ENCODE measurements at regions of chr1 and their contacts with region 1.

Region 1: DNA sequence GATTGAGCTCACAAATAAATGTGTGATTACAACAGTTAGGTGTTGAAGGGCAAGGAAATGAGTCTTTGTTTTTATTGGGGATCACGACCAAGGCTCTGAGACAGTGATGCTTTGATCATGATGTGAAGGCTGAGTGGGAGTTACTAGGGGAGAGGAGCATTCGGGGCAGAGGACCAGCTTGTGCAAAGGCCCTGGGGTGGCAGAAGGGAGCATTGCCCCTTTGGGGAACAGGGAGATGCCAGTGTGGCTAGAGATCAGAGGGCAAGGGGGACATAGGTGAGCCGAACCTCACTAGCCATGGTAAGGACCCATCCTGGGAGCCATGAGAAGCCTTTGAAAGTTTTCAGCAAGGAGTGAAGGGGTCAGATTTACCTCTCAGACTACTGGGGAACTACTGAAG is 31.1 kb downstream of the TNFRSF8 start:
- DNase-seq: no peak
- ATAC-seq: no peak
- H3K4me3 ChIP-seq: no peak overlapping the region
- H3K27ac ChIP-seq: no peak overlapping the region
- H3K4me1 ChIP-seq: no peaks in the 10 kb centered on the region
- H3K27me3 ChIP-seq: no peaks in the 10 kb centered on the region
- CTCF ChIP-seq: no peak

Region 2: DNA sequence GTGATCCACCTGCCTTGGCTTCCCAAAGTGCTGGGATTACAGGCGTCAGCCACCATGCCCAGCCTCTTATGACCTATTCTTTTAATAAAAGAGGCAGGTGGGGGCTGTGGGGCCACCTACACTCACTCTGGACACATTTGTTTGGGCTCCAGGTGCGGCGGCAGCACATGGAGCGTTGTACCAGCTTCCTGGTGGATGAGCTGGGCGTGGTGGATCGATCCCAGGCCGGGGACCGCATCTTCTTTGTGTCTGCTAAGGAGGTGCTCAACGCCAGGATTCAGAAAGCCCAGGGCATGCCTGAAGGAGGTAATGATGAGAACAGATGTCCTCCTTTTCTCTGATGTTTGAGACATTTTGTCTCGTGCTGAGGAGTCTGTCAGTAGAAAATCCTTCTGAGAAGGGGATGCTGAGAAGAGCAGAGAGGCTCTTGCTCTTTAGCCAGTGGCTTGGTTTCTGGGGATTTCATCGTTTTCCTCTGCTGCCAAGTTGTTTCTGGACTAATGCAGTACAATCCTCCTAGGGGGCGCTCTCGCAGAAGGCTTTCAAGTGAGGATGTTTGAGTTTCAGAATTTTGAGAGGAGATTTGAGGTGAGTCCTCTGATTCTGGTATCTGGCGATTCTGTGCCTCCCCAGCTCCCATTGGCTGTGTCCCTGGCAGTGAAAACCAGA is 92.8 kb before region 1 on chr1:
- CTCF ChIA-PET with region 1: interaction called, 11 read pairs
- POLR2A ChIA-PET with region 1: no interaction called
- in situ Hi-C with region 1: no loop called
- intact Hi-C with region 1: no loop called
- DNase-seq: no peak
- ATAC-seq: peak; percentile 10; the same call in 1 of the 2 replicates
- H3K4me3 ChIP-seq: no peak overlapping the region
- H3K27ac ChIP-seq: peak overlapping the region; percentile 55; the same call in 1 of the 2 replicates
- H3K4me1 ChIP-seq: 0 out of 2 replicates have a peak, but pooled peaks cover 3% of the 10 kb centered on the region
- H3K27me3 ChIP-seq: no peaks in the 10 kb centered on the region
- CTCF ChIP-seq: no peak; the same call in 1 of the 2 replicates

Region 3: GRCh38 chr1:12026586-12026985 is 67.6 kb before region 1 on chr1:
- CTCF ChIA-PET with region 1: interaction called, 10 read pairs
- POLR2A ChIA-PET with region 1: no interaction called
- in situ Hi-C with region 1: no loop called
- intact Hi-C with region 1: no loop called
- DNase-seq: no peak
- ATAC-seq: no peak
- H3K4me3 ChIP-seq: no peak overlapping the region
- H3K27ac ChIP-seq: no peak overlapping the region
- H3K4me1 ChIP-seq: no peaks in the 10 kb centered on the region
- H3K27me3 ChIP-seq: no peaks in the 10 kb centered on the region
- CTCF ChIP-seq: no peak

Region 4: GRCh38 chr1:12166834-12167492 is 72.8 kb after region 1 on chr1 and contains the start of gene TNFRSF1B:
- CTCF ChIA-PET with region 1: no interaction called
- POLR2A ChIA-PET with region 1: no interaction called
- in situ Hi-C with region 1: no loop called
- intact Hi-C with region 1: no loop called
- DNase-seq: no peak
- ATAC-seq: peak; percentile 76
- H3K4me3 ChIP-seq: peak within 1 kb of the TSS; percentile 52 to 57
- H3K27ac ChIP-seq: 0 out of 2 replicates have a peak within 1 kb of the TSS, but pooled peaks have one; percentile 44
- H3K4me1 ChIP-seq: peaks cover 11% of the 10 kb centered on the region
- H3K27me3 ChIP-seq: no peaks in the 10 kb centered on the region
- CTCF ChIP-seq: no peak
- total RNA-seq, gene TNFRSF1B: 18.8 TPM